Esophagus muscularis mucosa (tissue), 4 donors: ENCODE measurements at regions of chr11 and their contacts with region 1.

Region 1: DNA sequence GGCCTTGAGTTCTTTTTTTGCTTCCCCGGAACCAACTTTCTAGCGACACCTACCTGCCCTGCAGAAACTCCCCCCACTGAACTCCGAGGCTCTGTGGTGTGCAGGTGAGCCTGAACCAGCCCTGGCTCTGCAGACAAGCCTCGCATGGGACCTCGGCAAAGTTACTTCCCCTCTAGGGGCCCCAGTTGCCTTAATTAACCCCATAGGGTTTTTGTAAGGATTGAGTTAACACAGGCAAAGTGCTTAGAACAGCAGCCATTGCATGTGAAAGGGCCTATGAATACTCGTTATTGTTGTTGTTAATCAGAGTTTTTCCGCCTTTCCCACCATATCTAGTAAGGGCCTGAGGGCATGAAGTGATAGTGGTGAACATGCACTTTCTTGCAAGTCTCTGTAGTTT is 12.6 kb upstream of the SYT13 start:
- DNase-seq: peak; percentile 75
- H3K4me3 ChIP-seq: no peak overlapping the region
- H3K27ac ChIP-seq: no peak overlapping the region
- H3K4me1 ChIP-seq: no peaks in the 10 kb centered on the region
- H3K27me3 ChIP-seq: no peaks in the 10 kb centered on the region
- CTCF ChIP-seq: no peak
- EP300 ChIP-seq: no peak
- POLR2A ChIP-seq: no peak

Region 2: DNA sequence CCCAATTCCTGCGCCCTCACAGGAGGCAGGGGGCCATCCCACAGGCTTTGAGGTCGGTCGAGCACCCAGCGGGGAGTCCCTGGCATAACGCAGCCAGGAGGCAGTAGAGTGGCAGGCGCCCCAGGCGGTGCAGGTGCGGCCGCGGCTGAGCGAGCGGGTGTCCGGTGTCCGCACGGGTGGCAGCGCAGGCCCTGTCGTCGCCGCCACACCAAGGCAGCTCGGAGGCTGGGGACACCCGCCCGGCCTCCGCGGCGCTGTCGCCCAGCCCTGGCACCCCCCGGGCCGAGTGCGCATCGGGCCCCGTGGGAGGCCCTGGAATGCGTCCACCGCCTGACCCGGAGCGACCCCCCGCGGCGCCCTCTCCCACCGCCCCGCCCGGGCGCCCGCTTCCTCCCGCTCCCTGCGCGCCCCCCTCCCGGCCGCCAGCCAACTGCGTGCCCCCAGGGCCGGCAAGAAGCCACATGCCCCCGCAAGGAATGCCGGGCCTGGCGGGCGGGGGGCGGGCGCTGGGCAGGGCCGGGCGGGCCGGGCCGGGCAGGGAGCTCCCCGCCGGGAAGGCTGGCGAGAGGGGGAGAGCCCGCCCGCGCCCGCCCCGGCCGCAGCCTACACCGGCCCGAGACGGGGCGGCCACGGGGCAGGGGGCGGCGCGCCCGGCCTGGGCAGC is 118.4 kb before region 1 on chr11:
- intact Hi-C with region 1: loop called (anchors 5 kb)
- DNase-seq: no peak
- H3K4me3 ChIP-seq: peak overlapping the region; percentile 64 to 77 (median 73)
- H3K27ac ChIP-seq: peak overlapping the region; percentile 84 to 90 (median 89)
- H3K4me1 ChIP-seq: peaks cover 36 to 63% (median 46%) of the 10 kb centered on the region in 4 donors
- H3K27me3 ChIP-seq: no peaks in the 10 kb centered on the region
- CTCF ChIP-seq: peak; percentile 61 to 67 (median 62)
- EP300 ChIP-seq: no peak
- POLR2A ChIP-seq: no peak